MCF 10A (cell line): ENCODE measurements at regions of chr16 and their contacts with region 1.

Region 1: DNA sequence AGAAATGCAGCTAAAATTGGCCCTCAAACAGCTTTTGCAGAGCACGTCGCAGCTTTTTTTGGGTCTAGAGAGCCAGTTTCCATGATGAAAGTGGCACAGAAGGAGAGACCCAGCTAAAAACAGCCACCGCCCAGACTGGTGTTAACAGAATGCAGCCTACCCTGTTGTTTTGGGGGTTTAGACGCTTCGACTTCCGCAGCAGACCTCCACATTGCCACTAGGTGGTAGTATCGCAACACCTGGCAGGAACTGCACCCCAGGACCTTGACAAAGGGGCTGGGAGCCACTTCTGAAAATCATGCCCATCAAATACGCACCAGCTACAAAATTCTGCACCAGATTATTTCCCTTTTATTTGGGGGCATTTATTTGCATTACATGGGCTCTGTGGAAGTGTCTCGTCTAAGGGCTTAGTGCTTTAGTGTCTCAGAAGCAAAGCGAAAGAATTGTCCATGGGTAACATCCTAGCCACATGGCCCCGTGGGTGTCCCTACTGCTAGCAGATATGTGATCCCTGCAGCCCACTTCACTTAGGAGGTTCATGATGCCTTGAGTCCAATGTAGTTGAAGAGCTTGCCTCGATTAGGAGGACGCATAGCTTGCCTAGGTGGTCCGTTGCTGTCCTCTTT is 167.1 kb downstream of the HAPSTR1 start:
- DNase-seq: peak; percentile 49
- H3K4me3 Mint-ChIP-seq: no peak overlapping the region
- H3K27ac Mint-ChIP-seq: no peak overlapping the region
- H3K4me1 Mint-ChIP-seq: no peaks in the 10 kb centered on the region
- H3K27me3 Mint-ChIP-seq: no peaks in the 10 kb centered on the region
- CTCF ChIP-seq: peak; percentile 50

Region 2: GRCh38 chr16:9206156-9206555 is 52.4 kb before region 1 on chr16:
- CTCF ChIA-PET with region 1: no interaction called
- POLR2A ChIA-PET with region 1: no interaction called
- intact Hi-C with region 1: no loop called
- DNase-seq: no peak
- H3K4me3 Mint-ChIP-seq: no peak overlapping the region
- H3K27ac Mint-ChIP-seq: no peak overlapping the region
- H3K4me1 Mint-ChIP-seq: no peaks in the 10 kb centered on the region
- H3K27me3 Mint-ChIP-seq: peaks cover 11% of the 10 kb centered on the region
- CTCF ChIP-seq: no peak

Region 3: GRCh38 chr16:9219813-9220212 is 38.7 kb before region 1 on chr16:
- CTCF ChIA-PET with region 1: no interaction called
- POLR2A ChIA-PET with region 1: no interaction called
- intact Hi-C with region 1: no loop called
- DNase-seq: no peak
- H3K4me3 Mint-ChIP-seq: no peak overlapping the region
- H3K27ac Mint-ChIP-seq: no peak overlapping the region
- H3K4me1 Mint-ChIP-seq: no peaks in the 10 kb centered on the region
- H3K27me3 Mint-ChIP-seq: peaks cover 20% of the 10 kb centered on the region
- CTCF ChIP-seq: no peak

Region 4: DNA sequence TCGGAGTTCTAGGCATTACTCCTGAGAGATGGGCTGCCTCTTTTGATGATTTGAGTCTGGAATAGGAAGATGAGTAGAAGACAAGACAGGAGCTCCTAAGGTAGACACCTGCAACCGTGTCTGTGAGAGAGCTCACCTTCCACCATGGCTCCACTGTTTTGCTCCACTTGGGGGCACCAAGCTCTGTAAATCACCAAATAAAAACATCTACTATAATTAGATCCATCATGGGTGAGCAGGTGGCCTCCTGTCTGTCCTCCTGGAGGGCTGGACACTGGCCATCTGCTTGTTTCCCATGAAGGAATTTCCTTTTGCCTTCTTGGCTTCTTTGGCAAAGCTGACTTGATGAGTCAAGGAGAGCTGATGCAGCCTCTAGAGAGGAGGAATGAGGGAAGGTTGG is 11.9 kb after region 1 on chr16:
- CTCF ChIA-PET with region 1: interaction called, 27 read pairs
- POLR2A ChIA-PET with region 1: no interaction called
- intact Hi-C with region 1: no loop called
- DNase-seq: no peak
- H3K4me3 Mint-ChIP-seq: no peak overlapping the region
- H3K27ac Mint-ChIP-seq: no peak overlapping the region
- H3K4me1 Mint-ChIP-seq: no peaks in the 10 kb centered on the region
- H3K27me3 Mint-ChIP-seq: no peaks in the 10 kb centered on the region
- CTCF ChIP-seq: no peak

Region 5: GRCh38 chr16:9372934-9373890 is 114.7 kb after region 1 on chr16:
- CTCF ChIA-PET with region 1: no interaction called
- POLR2A ChIA-PET with region 1: no interaction called
- intact Hi-C with region 1: no loop called
- DNase-seq: no peak
- H3K4me3 Mint-ChIP-seq: no peak overlapping the region
- H3K27ac Mint-ChIP-seq: no peak overlapping the region
- H3K4me1 Mint-ChIP-seq: no peaks in the 10 kb centered on the region
- H3K27me3 Mint-ChIP-seq: no peaks in the 10 kb centered on the region
- CTCF ChIP-seq: no peak

Region 6: DNA sequence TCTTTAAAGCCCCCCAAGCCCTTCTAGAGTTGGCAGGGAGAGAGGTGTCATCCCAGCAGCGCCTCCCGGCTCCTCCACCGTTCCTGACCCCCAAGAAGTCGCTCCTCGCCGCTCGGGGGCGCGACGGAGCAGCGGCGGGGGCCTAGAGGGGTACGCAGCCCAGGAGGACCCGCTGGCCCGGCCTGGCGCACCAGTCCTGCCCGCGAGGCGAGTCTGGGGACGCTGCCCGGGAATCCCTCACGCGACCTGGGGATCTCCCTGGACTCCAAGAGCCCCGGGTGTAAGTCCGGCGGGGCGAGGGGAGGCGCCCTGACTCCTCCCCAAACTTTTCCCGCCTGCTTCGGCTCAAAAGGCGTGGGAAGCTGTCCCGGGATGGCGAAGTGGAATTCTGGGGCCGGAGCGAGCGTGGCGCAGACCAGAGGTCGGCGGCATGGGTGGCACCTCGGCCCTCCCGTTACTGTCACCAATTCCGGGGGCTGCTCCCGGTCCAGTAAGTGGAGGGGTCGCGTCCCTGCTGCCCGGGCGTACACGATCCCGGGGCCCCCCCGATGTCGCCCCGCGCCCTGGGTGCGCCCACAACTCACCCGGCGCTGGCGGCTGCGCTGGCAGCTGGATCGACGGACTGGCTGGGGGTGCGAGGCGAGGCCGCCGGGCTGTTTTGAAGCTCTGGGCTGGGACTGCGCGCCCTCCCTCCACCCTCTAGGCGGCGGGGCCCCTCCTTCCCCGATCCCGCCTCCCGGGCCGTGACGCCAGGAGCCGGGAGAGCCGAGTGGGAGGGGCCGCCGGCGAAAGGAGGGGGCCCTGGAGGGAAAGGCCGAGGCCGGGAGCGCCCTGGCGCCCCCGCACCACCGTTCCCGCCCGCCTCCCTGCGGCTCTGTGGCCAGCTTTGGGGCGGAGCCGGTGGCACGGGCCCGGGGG is 1321.7 kb after region 1 on chr16 and contains the start of gene EMP2:
- CTCF ChIA-PET with region 1: no interaction called
- POLR2A ChIA-PET with region 1: no interaction called
- intact Hi-C with region 1: no loop called
- DNase-seq: peak; percentile 76
- H3K4me3 Mint-ChIP-seq: peak within 1 kb of the TSS; percentile 73
- H3K27ac Mint-ChIP-seq: no peak within 1 kb of the TSS
- H3K4me1 Mint-ChIP-seq: peaks cover 16% of the 10 kb centered on the region
- H3K27me3 Mint-ChIP-seq: peaks cover 8% of the 10 kb centered on the region
- CTCF ChIP-seq: peak; percentile 23
- total RNA-seq, gene EMP2: 1.7 and 4.8 TPM in 2 replicates